ENCODE measurements at regions of chr19 and their contacts with region 1.

Region 1: GRCh38 chr19:51514866-51515481 is 13.4 kb upstream of the SIGLEC12 start:
- DNase-seq: peak; percentile 89
- ATAC-seq: peak; percentile 84
- H3K4me3 ChIP-seq: no peak overlapping the region
- H3K27ac ChIP-seq: no peak overlapping the region
- H3K4me1 ChIP-seq: no peaks in the 10 kb centered on the region
- H3K27me3 ChIP-seq: peaks cover 36% of the 10 kb centered on the region; the same call in 1 of the 2 replicates
- CTCF ChIP-seq: peak; percentile 93

Region 2: DNA sequence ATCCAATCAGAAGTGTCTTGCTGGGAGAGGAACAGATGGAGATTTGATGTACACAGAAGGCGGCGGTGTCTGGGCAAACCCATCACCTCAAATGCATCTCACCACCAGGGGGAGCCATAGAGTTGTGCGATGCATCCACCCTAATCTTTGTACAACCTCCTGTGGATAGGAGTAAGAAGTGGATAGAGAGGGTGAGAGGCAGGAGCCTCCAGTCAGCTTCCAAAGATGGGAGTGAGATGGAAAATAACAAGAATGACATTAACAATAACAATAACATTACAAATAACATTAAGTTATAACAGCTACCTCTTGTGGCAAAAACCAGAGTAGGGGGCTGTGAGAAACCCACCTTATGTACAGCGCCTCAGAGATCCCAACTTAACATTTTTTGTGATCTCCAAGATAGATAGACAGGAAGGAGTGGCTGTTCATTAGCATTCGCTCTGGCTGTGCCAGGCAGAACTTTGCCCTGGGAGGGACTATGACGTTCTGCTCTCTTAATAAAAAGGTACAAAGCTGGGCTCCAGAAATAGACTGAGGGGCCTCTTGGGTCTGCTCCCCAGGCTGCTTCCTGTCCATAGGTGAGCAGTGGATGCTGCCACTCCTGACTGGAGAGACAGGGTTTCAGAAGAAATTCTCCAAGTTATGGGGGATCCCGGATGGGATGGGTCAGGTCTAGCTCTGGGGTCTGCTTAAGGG is 41.8 kb before region 1 on chr19:
- CTCF ChIA-PET with region 1: interaction called, 4 read pairs
- POLR2A ChIA-PET with region 1: no interaction called
- intact Hi-C with region 1: loop called (anchors 1 kb)
- DNase-seq: peak; percentile 93
- ATAC-seq: peak; percentile 61
- H3K4me3 ChIP-seq: no peak overlapping the region
- H3K27ac ChIP-seq: no peak overlapping the region
- H3K4me1 ChIP-seq: peaks cover 27% of the 10 kb centered on the region
- H3K27me3 ChIP-seq: no peaks in the 10 kb centered on the region
- CTCF ChIP-seq: peak; percentile 96

Region 3: DNA sequence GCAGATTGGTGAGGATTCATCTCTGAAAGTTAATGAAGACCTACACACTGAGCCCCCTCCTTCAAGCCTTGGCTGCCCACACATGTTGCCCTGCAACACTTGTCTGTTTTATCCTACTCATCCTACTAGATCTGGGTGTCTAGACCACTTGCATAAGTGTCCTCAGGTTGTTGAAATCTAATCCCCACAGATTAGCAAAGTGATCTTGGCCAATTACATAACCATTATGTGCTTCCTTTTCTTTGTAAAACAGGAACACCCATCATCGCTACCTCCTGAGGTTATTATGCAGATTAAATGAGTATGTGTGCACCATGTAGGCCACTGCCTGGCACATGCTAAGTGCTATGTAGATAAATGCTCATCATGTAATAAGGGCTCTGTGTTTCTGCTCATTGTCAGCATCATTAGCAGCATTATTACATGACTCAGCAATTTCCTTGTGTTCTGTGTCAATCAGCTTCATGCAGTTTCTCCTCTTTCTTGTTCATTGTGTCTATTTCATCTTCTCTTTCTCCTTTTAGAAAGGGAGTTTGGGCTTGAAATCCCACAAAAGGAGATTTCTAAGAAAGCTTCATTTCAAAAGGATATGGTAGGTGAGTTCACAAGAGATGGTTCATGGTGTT is 71.2 kb after region 1 on chr19:
- CTCF ChIA-PET with region 1: no interaction called
- POLR2A ChIA-PET with region 1: no interaction called
- intact Hi-C with region 1: no loop called
- DNase-seq: no peak
- ATAC-seq: no peak
- H3K4me3 ChIP-seq: no peak overlapping the region; the same call in 1 of the 2 replicates
- H3K27ac ChIP-seq: no peak overlapping the region
- H3K4me1 ChIP-seq: no peaks in the 10 kb centered on the region
- H3K27me3 ChIP-seq: no peaks in the 10 kb centered on the region
- CTCF ChIP-seq: no peak

Measured in PC-3 (cell line).